Heart right ventricle (tissue), 16 donors: ENCODE measurements at regions of chr7 and their contacts with region 1.

Region 1: GRCh38 chr7:120805636-120806388 is 52.1 kb downstream of the TSPAN12 start:
- DNase-seq: peak in 1 of 2 donors; percentile 78
- ATAC-seq: peak in 6 of 8 donors; percentile 47 to 65 (median 64)
- H3K4me3 ChIP-seq: no peak overlapping the region
- H3K27ac ChIP-seq: no peak overlapping the region
- H3K4me1 ChIP-seq: peaks cover 0 to 35% (median 17%) of the 10 kb centered on the region in 9 donors
- H3K27me3 ChIP-seq: no peaks in the 10 kb centered on the region
- CTCF ChIP-seq: peak; percentile 82 to 96 (median 87)

Region 2: DNA sequence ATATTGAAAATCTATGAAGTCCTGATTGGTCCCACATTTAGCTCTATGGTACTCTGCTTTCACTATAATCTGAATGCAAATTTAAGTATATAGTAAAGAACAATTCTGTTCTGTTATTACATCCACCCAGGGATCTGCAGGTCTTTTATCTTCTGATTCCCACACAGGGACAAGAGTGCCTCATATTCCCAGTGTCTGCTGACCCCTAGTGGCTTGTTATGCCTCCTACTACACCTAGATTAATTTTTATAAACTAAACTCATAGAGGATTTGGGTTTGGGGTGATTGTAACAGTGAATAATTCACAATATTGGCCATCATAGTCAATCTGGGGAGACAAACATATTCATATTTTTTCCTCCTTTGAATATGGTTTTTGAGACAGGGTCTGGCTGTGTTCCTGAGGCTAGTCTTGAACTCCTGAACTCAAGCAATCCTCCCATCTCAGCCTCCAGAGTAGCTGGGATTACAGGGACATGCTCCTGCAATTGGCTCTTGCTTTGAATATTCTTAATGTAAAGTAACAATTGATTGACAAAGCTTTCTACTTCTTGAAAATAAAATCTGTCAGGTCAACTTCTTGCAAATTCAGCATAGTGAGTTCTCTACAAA is 250.7 kb before region 1 on chr7:
- intact Hi-C with region 1: no loop called
- DNase-seq: peak in 1 of 2 donors; percentile 13
- ATAC-seq: no peak
- H3K4me3 ChIP-seq: no peak overlapping the region
- H3K27ac ChIP-seq: no peak overlapping the region
- H3K4me1 ChIP-seq: no peaks in the 10 kb centered on the region
- H3K27me3 ChIP-seq: peaks cover 0 to 13% (median 0%) of the 10 kb centered on the region in 7 donors
- CTCF ChIP-seq: peak; percentile 20 to 68 (median 54)

Region 3: DNA sequence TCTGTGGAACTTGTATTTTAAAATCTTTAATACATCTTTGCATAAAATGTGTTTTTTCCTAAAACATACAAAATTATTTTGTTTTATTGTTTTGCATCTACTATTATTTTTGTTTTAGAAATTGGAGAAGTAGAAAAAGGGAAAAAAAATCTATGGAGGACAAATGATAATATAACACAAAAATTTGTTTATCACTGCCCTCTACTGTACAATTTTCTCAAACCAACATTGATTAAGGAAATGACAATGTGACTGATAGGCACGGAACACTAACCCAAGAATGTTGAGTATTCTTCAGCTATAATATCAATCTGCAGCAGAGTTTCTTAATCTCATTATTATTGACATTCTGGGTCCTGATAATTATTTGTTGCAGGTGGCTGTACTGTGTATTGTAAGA is 135.3 kb after region 1 on chr7:
- intact Hi-C with region 1: loop called in 9 of 10 experiments (anchors 1 to 5 kb)
- DNase-seq: no peak
- ATAC-seq: peak in 2 of 8 donors; percentile 51 to 64
- H3K4me3 ChIP-seq: no peak overlapping the region
- H3K27ac ChIP-seq: peak overlapping the region in 2 of 10 donors; percentile 22 to 23
- H3K4me1 ChIP-seq: peaks cover 0 to 9% (median 0%) of the 10 kb centered on the region in 9 donors
- H3K27me3 ChIP-seq: no peaks in the 10 kb centered on the region
- CTCF ChIP-seq: peak in 7 of 9 donors; percentile 30 to 63 (median 51)

Region 4: GRCh38 chr7:121459148-121459547 is 653.3 kb after region 1 on chr7:
- intact Hi-C with region 1: no loop called
- DNase-seq: no peak
- ATAC-seq: no peak
- H3K4me3 ChIP-seq: no peak overlapping the region
- H3K27ac ChIP-seq: no peak overlapping the region
- H3K4me1 ChIP-seq: no peaks in the 10 kb centered on the region
- H3K27me3 ChIP-seq: no peaks in the 10 kb centered on the region
- CTCF ChIP-seq: no peak